Sciatic nerve (tissue), 2 donors: ENCODE measurements at regions of chr2 and their contacts with region 1.

Region 1: DNA sequence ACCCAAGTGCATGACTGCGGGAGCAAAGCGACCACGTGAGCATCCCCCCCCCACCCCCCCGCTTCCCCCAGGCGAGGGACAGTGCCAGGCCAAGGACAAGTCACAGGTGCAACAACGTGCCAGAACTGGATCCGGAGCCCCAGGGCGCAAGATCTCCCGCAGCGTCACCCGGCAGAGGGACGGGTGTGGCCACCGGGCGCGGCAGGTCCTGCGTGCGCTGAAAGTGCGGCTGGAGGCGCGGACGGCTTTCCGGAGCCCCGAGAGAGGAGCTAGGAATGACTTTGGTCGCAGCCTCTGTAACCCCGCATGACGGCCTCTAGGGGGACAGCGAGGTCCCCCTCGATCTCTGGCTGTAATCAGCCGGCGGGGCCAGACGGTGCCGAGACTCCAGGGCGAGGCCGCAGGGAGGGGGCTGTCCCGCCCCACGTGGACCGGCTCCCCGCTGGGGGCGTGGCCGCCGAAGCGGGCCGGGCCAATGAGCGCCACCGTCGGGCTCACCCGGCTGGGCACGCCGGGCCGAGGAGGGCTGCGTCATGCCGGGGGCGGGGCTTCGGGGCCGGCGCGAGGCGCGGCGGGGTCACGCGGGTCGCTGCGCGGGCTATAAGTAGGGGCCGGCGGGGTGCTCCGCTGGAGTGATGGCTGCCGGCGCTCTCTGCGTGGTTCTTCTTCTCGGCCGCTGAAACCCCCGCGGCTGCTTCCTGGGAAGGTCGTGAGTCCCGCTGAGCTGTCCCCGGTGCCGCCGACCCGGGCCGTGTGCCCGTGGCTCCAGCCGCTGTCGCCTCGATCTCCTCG is at the start of gene SLC20A1:
- DNase-seq: peak; percentile 98
- ATAC-seq: peak; percentile 98
- total RNA-seq, gene SLC20A1: 51.1 TPM

Region 2: GRCh38 chr2:112584134-112584890 is 61.2 kb before region 1 on chr2 and contains the start of gene CHCHD5:
- intact Hi-C with region 1: loop called (anchors 10 kb)
- DNase-seq: peak; percentile 97
- ATAC-seq: peak; percentile 96
- total RNA-seq, gene CHCHD5: 21.2 TPM